ENCODE measurements at regions of chr13 and their contacts with region 1.

Region 1: GRCh38 chr13:40388617-40389016 is 277.8 kb downstream of the FOXO1 start:
- DNase-seq: peak; percentile 92
- H3K4me3 Mint-ChIP-seq: peak overlapping the region; percentile 68
- H3K27ac Mint-ChIP-seq: peak overlapping the region; percentile 94
- H3K4me1 Mint-ChIP-seq: peaks cover 29% of the 10 kb centered on the region
- H3K27me3 Mint-ChIP-seq: no peaks in the 10 kb centered on the region

Region 2: GRCh38 chr13:40251343-40252032 is 137.1 kb before region 1 on chr13:
- CTCF ChIA-PET with region 1: no interaction called
- POLR2A ChIA-PET with region 1: no interaction called
- intact Hi-C with region 1: loop called (anchors 1 kb)
- DNase-seq: peak; percentile 13
- H3K4me3 Mint-ChIP-seq: no peak overlapping the region
- H3K27ac Mint-ChIP-seq: peak overlapping the region; percentile 70
- H3K4me1 Mint-ChIP-seq: peaks cover 42% of the 10 kb centered on the region
- H3K27me3 Mint-ChIP-seq: no peaks in the 10 kb centered on the region

Region 3: DNA sequence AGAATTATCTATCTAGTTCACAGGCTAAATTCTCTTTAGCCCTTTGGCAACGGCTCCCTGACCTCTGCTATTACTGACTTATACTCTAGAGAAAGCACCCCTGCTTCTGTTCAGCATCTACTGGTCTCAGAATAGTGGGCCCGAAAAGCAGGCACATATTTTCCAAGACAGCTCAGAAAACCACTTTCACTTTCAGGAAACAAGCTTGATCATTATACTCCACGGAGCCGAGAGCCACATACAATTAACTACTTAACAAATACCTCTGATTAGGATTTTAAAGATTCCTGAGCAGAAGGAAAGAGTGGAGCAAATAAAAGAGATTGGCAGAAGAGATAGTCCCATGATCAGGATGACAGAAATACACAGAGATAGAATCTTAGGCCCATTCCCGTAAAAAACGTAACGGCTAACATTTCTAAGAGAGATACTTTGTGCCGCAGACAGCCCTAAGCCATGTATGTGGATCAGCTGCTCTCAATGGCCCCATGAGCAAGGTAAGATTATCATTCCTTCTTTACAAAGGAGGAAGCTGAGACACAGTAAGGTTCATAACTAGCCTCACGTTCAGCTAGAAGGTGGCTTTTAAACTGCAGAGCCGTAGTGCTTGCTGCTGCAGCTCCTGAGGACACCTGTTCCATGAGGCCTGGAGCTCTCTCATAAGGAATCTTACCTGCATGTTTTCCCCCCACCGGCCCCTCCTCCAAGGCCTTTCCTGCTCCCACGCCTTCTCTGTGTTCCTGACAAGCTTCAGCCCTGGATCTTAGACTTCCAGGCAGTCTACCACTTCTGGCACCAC is 50.6 kb after region 1 on chr13:
- CTCF ChIA-PET with region 1: no interaction called
- POLR2A ChIA-PET with region 1: no interaction called
- intact Hi-C with region 1: loop called (anchors 2 kb)
- DNase-seq: peak; percentile 42
- H3K4me3 Mint-ChIP-seq: peak overlapping the region; percentile 59
- H3K27ac Mint-ChIP-seq: peak overlapping the region; percentile 71
- H3K4me1 Mint-ChIP-seq: peaks cover 34% of the 10 kb centered on the region
- H3K27me3 Mint-ChIP-seq: no peaks in the 10 kb centered on the region

Region 4: DNA sequence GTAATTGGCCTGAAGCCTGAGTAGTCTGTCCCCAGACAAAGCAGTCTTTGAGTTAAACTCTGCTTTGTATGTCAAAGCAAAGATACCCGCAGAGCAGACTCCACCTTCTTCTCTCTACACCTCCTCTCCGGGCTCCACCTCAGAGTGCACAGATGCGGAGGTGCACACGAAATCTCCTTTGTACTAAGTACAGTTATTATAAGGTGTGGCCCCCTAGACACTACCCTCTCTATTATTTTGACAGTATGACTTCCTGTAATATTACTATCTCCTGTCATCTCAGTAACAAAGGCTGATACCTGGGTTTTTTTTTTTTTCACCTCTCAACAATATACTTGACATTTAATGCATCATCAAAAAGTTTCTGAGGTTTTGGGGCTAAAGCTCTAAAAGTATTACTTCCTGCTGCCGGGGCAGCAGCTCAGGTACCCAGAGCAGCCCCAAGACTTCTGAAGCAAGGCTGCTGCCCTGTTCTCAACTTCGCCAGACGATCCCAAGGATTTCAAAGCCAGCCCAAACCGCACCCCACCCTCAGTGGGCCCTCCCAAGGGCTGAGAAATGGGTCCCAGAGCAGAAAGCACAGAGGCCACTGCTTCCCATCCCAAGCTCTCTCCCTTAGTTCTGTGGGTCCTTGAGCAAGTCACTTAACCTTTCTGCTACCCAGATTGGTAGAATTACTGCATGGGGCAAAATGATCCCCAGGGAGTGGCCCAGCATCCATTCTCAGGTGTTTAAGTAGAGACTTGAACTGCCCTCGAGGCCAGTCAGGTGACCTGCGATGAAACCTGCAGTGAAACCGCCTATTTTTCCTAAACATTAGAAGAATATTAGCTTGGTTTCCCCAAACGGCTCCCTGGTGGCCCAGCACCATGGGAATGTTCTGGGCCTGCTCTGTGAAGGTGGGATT is 97.2 kb after region 1 on chr13:
- CTCF ChIA-PET with region 1: no interaction called
- POLR2A ChIA-PET with region 1: no interaction called
- intact Hi-C with region 1: loop called (anchors 2 kb)
- DNase-seq: peak; percentile 81
- H3K4me3 Mint-ChIP-seq: peak overlapping the region; percentile 24
- H3K27ac Mint-ChIP-seq: peak overlapping the region; percentile 75
- H3K4me1 Mint-ChIP-seq: peaks cover 78% of the 10 kb centered on the region
- H3K27me3 Mint-ChIP-seq: no peaks in the 10 kb centered on the region

Region 5: GRCh38 chr13:40597740-40598370 is 209.2 kb after region 1 on chr13:
- CTCF ChIA-PET with region 1: no interaction called
- POLR2A ChIA-PET with region 1: no interaction called
- intact Hi-C with region 1: loop called (anchors 2 kb)
- DNase-seq: peak; percentile 24
- H3K4me3 Mint-ChIP-seq: peak overlapping the region; percentile 39
- H3K27ac Mint-ChIP-seq: peak overlapping the region; percentile 85
- H3K4me1 Mint-ChIP-seq: peaks cover 87% of the 10 kb centered on the region
- H3K27me3 Mint-ChIP-seq: no peaks in the 10 kb centered on the region

Region 6: GRCh38 chr13:40613192-40613818 is 224.7 kb after region 1 on chr13:
- CTCF ChIA-PET with region 1: no interaction called
- POLR2A ChIA-PET with region 1: no interaction called
- intact Hi-C with region 1: loop called (anchors 5 kb)
- DNase-seq: peak; percentile 77
- H3K4me3 Mint-ChIP-seq: peak overlapping the region; percentile 74
- H3K27ac Mint-ChIP-seq: peak overlapping the region; percentile 97
- H3K4me1 Mint-ChIP-seq: peaks cover 92% of the 10 kb centered on the region
- H3K27me3 Mint-ChIP-seq: no peaks in the 10 kb centered on the region